ENCODE measurements at regions of chr3 and their contacts with region 1.

Region 1: GRCh38 chr3:73502609-73503583 is 121.8 kb downstream of the PDZRN3 start:
- DNase-seq: peak; percentile 38 to 58
- ATAC-seq: peak in 7 of 8 donors; percentile 39 to 66 (median 58)
- H3K4me3 ChIP-seq: no peak overlapping the region
- H3K27ac ChIP-seq: peak overlapping the region in 6 of 10 donors; percentile 0 to 45 (median 36)
- H3K4me1 ChIP-seq: peaks cover 0 to 63% (median 18%) of the 10 kb centered on the region in 9 donors
- H3K27me3 ChIP-seq: no peaks in the 10 kb centered on the region
- CTCF ChIP-seq: peak; percentile 41 to 88 (median 80)

Region 2: DNA sequence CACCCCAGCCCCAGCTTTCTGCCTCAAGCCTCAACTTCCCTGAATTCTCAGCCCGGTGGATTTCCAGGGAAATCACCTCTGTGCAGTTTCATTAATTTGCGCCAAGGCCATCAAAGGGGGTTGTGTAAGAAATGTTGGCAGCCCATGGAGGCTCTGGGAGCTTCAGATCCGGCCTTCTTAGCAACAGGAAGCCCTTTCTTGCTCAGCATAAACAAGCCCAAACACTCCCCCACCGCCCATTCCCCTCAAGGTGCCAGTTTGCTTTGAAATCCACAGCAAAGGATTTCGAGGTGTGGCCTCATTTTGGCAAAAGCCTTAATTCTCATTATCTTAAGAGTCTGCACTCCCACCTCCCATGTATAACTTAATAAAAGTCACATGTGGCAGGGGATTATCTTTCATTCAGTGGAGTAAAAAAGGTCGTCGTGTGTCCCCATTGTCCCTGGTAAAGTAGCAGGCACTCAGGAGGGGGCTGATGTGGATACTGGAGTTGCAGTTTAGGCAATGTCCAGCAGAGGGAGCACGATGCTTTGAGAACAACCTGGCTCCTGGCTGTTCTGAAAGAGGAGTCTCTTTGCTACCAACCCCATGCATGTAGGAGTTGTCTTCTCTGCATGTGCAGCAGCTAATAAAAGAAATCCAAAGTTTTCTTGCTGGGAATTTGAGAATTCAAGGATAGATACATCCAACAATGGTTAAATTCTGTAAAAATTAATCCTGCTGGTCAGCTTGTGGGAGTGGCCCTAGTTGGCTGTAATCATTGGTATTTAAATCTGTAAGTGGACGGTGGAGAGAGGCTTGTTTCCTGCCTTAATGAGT is 401.9 kb before region 1 on chr3:
- intact Hi-C with region 1: loop called (anchors 1 to 5 kb)
- DNase-seq: peak; percentile 43 to 84
- ATAC-seq: peak; percentile 66 to 91 (median 86)
- H3K4me3 ChIP-seq: no peak overlapping the region
- H3K27ac ChIP-seq: no peak overlapping the region
- H3K4me1 ChIP-seq: peaks cover 0 to 8% (median 0%) of the 10 kb centered on the region in 9 donors
- H3K27me3 ChIP-seq: no peaks in the 10 kb centered on the region
- CTCF ChIP-seq: peak; percentile 82 to 95 (median 93)

Region 3: DNA sequence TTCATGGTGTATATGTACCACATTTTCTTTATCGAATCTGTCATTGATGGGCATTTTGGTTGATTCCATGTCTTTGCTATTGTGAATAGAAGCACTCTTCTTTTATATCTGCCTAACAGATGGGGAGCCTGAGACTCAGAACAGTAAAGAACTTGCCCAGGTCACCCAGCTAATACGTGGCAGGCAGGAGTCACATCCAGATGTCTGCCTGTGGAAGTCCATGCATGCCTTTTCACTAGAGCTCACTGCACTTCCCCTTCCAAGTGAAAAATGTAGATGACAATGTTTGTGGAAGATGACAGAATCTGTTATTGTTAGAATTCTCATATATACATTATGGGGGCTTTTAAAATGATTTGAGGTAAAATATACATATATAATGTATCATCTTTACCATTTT is 43.2 kb before region 1 on chr3:
- intact Hi-C with region 1: loop called in 6 of 10 experiments (anchors 2 to 5 kb)
- DNase-seq: no peak
- ATAC-seq: no peak
- H3K4me3 ChIP-seq: no peak overlapping the region
- H3K27ac ChIP-seq: no peak overlapping the region
- H3K4me1 ChIP-seq: peaks cover 3 to 27% (median 14%) of the 10 kb centered on the region in 9 donors
- H3K27me3 ChIP-seq: no peaks in the 10 kb centered on the region
- CTCF ChIP-seq: no peak

Region 4: DNA sequence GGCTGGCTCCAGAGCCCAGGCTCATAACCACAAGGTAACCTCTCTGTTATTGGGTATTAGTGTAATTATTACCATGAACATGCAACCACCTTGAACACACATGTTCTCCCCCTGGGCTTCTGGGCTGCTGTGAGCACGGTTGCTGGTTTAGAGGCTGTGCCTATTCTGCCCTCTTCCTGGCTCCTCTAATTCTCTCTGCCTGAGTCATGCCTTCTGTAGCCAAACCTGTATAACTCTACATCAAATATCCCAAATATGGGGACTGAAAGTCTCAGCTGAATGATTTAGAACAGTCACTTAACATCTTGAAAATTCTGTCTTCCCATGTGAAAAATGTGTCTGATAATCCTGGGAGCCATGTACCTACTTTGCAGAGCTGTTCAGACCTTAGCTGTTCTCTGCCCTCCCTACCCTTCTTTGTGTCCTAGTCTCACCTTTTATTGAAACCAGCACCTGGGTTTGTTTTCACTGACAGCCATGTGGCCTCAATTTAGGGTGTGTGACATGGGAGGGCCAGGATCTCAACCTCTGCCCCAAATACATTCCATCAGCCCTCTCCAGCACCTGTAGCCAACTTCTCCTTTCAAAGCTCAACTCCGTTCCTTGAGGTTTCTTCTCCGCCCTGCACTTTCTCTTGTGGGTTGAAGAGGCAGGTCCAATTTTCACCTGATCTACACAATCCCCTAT is 61.1 kb after region 1 on chr3:
- intact Hi-C with region 1: no loop called
- DNase-seq: no peak
- ATAC-seq: peak in 1 of 8 donors; percentile 31
- H3K4me3 ChIP-seq: no peak overlapping the region
- H3K27ac ChIP-seq: peak overlapping the region in 1 of 10 donors; percentile 9
- H3K4me1 ChIP-seq: peaks cover 2 to 68% (median 17%) of the 10 kb centered on the region in 9 donors
- H3K27me3 ChIP-seq: no peaks in the 10 kb centered on the region
- CTCF ChIP-seq: no peak

Region 5: GRCh38 chr3:73766599-73767381 is 263.9 kb after region 1 on chr3:
- intact Hi-C with region 1: loop called in 3 of 10 experiments (anchors 2 to 10 kb)
- DNase-seq: peak in 1 of 2 donors; percentile 5
- ATAC-seq: peak; percentile 40 to 75 (median 68)
- H3K4me3 ChIP-seq: peak overlapping the region in 5 of 10 donors; percentile 13 to 24 (median 21)
- H3K27ac ChIP-seq: peak overlapping the region in 9 of 10 donors; percentile 26 to 79 (median 55)
- H3K4me1 ChIP-seq: peaks cover 0 to 27% (median 10%) of the 10 kb centered on the region in 9 donors
- H3K27me3 ChIP-seq: no peaks in the 10 kb centered on the region
- CTCF ChIP-seq: no peak

Region 6: DNA sequence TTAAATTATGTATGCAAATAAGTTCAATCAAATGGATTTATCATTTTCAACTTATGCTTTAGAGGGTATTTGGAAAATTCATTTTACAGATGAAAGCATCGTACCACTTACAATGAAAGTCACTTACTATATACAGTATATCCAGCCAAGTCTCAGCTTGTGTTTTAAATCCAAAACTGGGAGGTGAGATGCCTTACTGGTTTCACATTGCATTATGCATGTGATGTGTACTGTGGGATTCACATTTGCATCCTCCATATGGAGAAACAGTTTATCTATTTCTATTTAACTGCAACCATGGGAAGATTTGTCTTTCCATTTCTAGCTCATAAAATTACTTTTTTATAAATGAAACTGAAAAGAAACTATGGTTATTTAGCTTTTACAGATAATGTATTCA is 863.4 kb after region 1 on chr3:
- intact Hi-C with region 1: no loop called
- DNase-seq: no peak
- ATAC-seq: no peak
- H3K4me3 ChIP-seq: no peak overlapping the region
- H3K27ac ChIP-seq: no peak overlapping the region
- H3K4me1 ChIP-seq: no peaks in the 10 kb centered on the region
- H3K27me3 ChIP-seq: no peaks in the 10 kb centered on the region
- CTCF ChIP-seq: no peak

Region 7: GRCh38 chr3:74750901-74751300 is 1248.0 kb after region 1 on chr3:
- intact Hi-C with region 1: no loop called
- DNase-seq: peak in 1 of 2 donors; percentile 6
- ATAC-seq: no peak
- H3K4me3 ChIP-seq: no peak overlapping the region
- H3K27ac ChIP-seq: no peak overlapping the region
- H3K4me1 ChIP-seq: no peaks in the 10 kb centered on the region
- H3K27me3 ChIP-seq: no peaks in the 10 kb centered on the region
- CTCF ChIP-seq: no peak

Measured in heart right ventricle (tissue), 16 donors.